Activated B cell treated with CpG ODN at 0.5 μM for 24 hours (primary cell): ENCODE measurements at regions of chr19 and their contacts with region 1.

Region 1: DNA sequence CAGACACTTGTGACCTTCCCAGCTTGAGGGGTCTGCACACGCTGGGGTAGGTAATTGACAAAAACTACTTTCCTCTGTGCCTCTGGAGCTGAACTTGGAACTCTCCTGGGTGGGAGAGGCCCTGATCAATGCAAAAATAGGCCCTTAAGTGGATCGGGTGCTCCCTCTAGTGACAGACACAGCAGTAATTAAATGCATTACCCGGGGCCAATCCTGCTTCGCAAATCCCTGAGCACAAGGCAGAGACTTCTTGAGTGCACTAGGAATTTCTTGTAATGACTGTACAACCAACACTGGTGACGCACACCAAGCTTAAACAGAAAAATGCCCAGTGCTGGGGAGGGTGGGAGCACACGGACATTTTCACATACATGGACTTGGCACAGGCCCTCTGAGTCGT is 10.6 kb upstream of the UBE2S start:
- DNase-seq: no peak
- ATAC-seq: peak; percentile 62
- H3K4me3 Mint-ChIP-seq: no peak overlapping the region
- H3K27ac Mint-ChIP-seq: no peak overlapping the region
- H3K4me1 Mint-ChIP-seq: peaks cover 3% of the 10 kb centered on the region
- H3K27me3 Mint-ChIP-seq: peaks cover 23% of the 10 kb centered on the region
- CTCF ChIP-seq: no peak

Region 2: DNA sequence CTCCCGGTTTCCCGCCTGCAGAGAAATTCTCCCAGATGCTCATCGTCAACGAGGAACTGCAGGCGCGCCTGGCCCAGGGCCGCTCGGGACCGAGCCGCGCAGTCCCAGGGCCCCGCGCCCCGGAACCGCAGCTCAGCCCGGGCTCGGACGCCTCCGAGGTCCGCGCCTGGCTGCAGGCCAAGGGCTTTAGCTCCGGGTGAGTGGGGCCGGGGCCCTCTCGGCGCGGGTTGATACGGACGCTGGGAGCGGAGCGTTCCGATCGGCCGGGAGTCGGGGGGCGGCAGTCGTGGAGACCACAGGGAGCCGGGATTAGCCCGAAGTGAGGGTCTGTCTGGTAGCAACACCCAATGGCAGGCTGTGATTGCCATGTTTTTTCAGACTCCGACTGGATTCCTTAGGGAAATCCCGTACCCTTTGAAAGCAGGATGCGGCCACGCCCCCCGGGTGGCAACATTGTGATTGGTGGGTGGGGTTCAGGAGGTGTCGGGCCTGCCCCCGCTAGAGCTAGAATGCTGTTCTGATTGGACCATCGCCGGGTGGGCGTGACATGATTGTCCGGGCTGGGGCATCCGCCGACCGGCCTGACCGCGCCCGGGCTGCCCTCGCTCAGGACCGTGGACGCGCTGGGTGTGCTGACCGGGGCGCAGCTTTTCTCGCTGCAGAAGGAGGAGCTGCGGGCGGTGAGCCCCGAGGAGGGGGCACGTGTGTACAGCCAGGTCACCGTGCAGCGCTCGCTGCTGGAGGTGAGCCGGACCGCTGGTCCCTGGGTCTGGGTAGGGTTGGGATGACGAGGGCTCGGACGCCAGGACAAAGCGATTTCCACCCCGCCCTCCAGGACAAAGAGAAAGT is 331.3 kb before region 1 on chr19:
- CTCF ChIA-PET with region 1: no interaction called
- POLR2A ChIA-PET with region 1: no interaction called
- intact Hi-C with region 1: loop called (anchors 2 kb)
- DNase-seq: peak; percentile 39
- ATAC-seq: peak; percentile 52
- H3K4me3 Mint-ChIP-seq: peak overlapping the region; percentile 69
- H3K27ac Mint-ChIP-seq: no peak overlapping the region
- H3K4me1 Mint-ChIP-seq: peaks cover 31% of the 10 kb centered on the region
- H3K27me3 Mint-ChIP-seq: peaks cover 49% of the 10 kb centered on the region
- CTCF ChIP-seq: no peak

Region 3: DNA sequence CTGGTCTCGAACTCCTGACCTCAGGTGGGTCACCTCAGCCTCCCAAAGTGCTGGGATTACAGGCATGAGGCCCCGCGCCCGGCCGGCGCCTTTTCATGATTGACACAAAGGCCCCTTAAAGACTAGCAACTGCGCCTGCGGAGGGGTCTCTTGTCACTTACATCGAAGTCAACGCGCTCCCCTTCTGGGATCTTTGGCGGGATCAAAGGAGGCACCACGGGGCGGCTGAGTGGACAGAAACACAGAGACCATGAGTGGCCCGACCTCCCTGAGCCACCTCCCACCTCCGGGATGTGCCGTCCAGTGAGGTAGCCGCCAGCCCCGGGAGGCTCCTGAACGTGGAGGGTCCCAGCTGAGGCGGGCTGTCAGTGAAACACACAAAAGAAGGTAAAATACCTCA is 276.5 kb before region 1 on chr19:
- CTCF ChIA-PET with region 1: interaction called, 37 read pairs
- POLR2A ChIA-PET with region 1: no interaction called
- intact Hi-C with region 1: loop called (anchors 1 kb)
- DNase-seq: no peak
- ATAC-seq: no peak
- H3K4me3 Mint-ChIP-seq: no peak overlapping the region
- H3K27ac Mint-ChIP-seq: no peak overlapping the region
- H3K4me1 Mint-ChIP-seq: peaks cover 6% of the 10 kb centered on the region
- H3K27me3 Mint-ChIP-seq: peaks cover 51% of the 10 kb centered on the region
- CTCF ChIP-seq: no peak

Region 4: GRCh38 chr19:55199623-55200204 is 218.5 kb before region 1 on chr19:
- CTCF ChIA-PET with region 1: no interaction called
- POLR2A ChIA-PET with region 1: no interaction called
- intact Hi-C with region 1: loop called (anchors 5 kb)
- DNase-seq: no peak
- ATAC-seq: no peak
- H3K4me3 Mint-ChIP-seq: no peak overlapping the region
- H3K27ac Mint-ChIP-seq: no peak overlapping the region
- H3K4me1 Mint-ChIP-seq: no peaks in the 10 kb centered on the region
- H3K27me3 Mint-ChIP-seq: peaks cover 35% of the 10 kb centered on the region
- CTCF ChIP-seq: no peak

Region 5: DNA sequence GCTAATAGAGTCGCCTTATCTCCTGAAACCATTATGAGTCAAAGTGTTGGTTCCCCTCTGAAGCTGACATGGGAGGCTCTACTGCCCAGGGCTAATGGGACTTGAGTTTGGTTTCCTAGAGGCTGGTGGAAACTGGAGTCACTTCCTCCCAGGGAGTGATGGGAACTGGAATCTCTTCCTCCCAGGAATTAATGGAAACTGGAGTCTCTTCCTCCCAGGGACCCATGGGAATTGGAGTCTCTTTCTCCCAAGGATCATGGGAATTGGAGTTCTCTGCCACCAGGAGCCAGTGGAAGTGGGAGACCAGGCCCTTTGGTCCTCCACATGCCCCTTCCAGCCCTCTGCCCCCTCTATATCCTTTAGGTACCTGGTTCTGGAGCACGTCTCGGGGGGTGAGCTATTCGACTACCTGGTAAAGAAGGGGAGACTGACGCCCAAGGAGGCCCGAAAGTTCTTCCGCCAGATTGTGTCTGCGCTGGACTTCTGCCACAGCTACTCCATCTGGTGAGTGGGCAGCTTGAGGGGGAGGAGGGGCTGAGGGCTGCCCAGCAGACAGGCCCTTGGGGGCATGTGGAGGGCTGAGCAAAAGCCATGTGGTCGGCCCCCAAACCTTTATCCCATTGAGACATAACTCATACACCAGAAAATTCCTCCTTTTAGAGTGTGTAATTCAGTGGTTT is 128.9 kb before region 1 on chr19:
- CTCF ChIA-PET with region 1: no interaction called
- POLR2A ChIA-PET with region 1: no interaction called
- intact Hi-C with region 1: loop called (anchors 1 kb)
- DNase-seq: no peak
- ATAC-seq: no peak
- H3K4me3 Mint-ChIP-seq: no peak overlapping the region
- H3K27ac Mint-ChIP-seq: no peak overlapping the region
- H3K4me1 Mint-ChIP-seq: peaks cover 4% of the 10 kb centered on the region
- H3K27me3 Mint-ChIP-seq: no peaks in the 10 kb centered on the region
- CTCF ChIP-seq: no peak

Region 6: GRCh38 chr19:55432241-55432959 is 14.2 kb after region 1 on chr19:
- CTCF ChIA-PET with region 1: no interaction called
- POLR2A ChIA-PET with region 1: no interaction called
- intact Hi-C with region 1: no loop called
- DNase-seq: no peak
- ATAC-seq: no peak
- H3K4me3 Mint-ChIP-seq: no peak overlapping the region
- H3K27ac Mint-ChIP-seq: no peak overlapping the region
- H3K4me1 Mint-ChIP-seq: no peaks in the 10 kb centered on the region
- H3K27me3 Mint-ChIP-seq: peaks cover 42% of the 10 kb centered on the region
- CTCF ChIP-seq: no peak